ENCODE measurements at regions of chr17 and their contacts with region 1.

Region 1: GRCh38 chr17:74864866-74865395 is 5.2 kb upstream of the GRIN2C start:
- DNase-seq: peak; percentile 57
- H3K4me3 Mint-ChIP-seq: no peak overlapping the region
- H3K27ac Mint-ChIP-seq: no peak overlapping the region
- H3K4me1 Mint-ChIP-seq: no peaks in the 10 kb centered on the region
- H3K27me3 Mint-ChIP-seq: peaks cover 13% of the 10 kb centered on the region
- CTCF ChIP-seq: peak; percentile 83

Region 2: GRCh38 chr17:74566132-74566753 is 298.7 kb before region 1 on chr17:
- CTCF ChIA-PET with region 1: no interaction called
- POLR2A ChIA-PET with region 1: no interaction called
- intact Hi-C with region 1: loop called (anchors 10 kb)
- DNase-seq: peak; percentile 78
- H3K4me3 Mint-ChIP-seq: no peak overlapping the region
- H3K27ac Mint-ChIP-seq: no peak overlapping the region
- H3K4me1 Mint-ChIP-seq: peaks cover 33% of the 10 kb centered on the region
- H3K27me3 Mint-ChIP-seq: no peaks in the 10 kb centered on the region
- CTCF ChIP-seq: peak; percentile 66

Region 3: DNA sequence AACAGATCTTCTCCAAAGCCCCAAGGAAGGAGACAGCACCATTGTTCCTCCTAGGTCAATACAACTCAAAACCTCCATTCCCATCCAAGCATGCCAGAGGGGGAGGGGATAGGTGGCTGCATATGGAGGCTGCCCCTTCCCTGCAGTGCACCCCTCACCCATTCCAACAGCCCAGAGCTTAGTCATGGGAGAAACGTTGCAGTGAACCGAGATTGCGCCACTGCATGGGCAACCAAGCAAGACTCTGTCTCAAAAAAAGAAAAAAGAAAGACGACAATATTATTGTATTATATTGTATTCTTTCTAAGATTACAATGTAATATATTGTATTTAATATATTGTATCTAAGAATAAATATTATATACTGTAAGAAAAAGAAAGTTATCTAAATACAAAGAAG is 205.0 kb before region 1 on chr17:
- CTCF ChIA-PET with region 1: interaction called, 6 read pairs
- POLR2A ChIA-PET with region 1: no interaction called
- intact Hi-C with region 1: loop called (anchors 2 kb)
- DNase-seq: no peak
- H3K4me3 Mint-ChIP-seq: no peak overlapping the region
- H3K27ac Mint-ChIP-seq: no peak overlapping the region
- H3K4me1 Mint-ChIP-seq: peaks cover 6% of the 10 kb centered on the region
- H3K27me3 Mint-ChIP-seq: peaks cover 89% of the 10 kb centered on the region
- CTCF ChIP-seq: no peak

Region 4: GRCh38 chr17:74742153-74742515 is 122.8 kb before region 1 on chr17:
- CTCF ChIA-PET with region 1: interaction called, 69 read pairs
- POLR2A ChIA-PET with region 1: interaction called, 7 read pairs
- intact Hi-C with region 1: no loop called
- DNase-seq: no peak
- H3K4me3 Mint-ChIP-seq: no peak overlapping the region
- H3K27ac Mint-ChIP-seq: no peak overlapping the region
- H3K4me1 Mint-ChIP-seq: peaks cover 6% of the 10 kb centered on the region
- H3K27me3 Mint-ChIP-seq: peaks cover 15% of the 10 kb centered on the region
- CTCF ChIP-seq: no peak

Region 5: DNA sequence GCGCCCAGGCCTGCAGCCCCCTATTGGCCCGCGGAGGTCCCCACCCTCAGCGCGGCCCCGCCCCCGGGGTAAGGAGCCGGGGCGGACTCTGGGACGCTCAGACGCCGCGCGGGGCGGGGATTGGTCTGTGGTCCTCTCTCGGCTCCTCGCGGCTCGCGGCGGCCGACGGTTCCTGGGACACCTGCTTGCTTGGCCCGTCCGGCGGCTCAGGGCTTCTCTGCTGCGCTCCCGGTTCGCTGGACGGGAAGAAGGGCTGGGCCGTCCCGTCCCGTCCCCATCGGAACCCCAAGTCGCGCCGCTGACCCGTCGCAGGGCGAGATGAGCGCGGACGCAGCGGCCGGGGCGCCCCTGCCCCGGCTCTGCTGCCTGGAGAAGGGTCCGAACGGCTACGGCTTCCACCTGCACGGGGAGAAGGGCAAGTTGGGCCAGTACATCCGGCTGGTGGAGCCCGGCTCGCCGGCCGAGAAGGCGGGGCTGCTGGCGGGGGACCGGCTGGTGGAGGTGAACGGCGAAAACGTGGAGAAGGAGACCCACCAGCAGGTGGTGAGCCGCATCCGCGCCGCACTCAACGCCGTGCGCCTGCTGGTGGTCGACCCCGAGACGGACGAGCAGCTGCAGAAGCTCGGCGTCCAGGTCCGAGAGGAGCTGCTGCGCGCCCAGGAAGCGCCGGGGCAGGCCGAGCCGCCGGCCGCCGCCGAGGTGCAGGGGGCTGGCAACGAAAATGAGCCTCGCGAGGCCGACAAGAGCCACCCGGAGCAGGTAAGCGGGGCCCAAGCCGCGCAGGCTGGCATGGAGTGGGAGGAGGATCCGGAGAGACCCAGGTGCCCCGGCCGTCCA is 116.2 kb before region 1 on chr17 and contains the start of gene NHERF1:
- CTCF ChIA-PET with region 1: interaction called, 69 read pairs
- POLR2A ChIA-PET with region 1: interaction called, 7 read pairs
- intact Hi-C with region 1: no loop called
- DNase-seq: peak; percentile 94
- H3K4me3 Mint-ChIP-seq: peak within 1 kb of the TSS; percentile 88
- H3K27ac Mint-ChIP-seq: peak within 1 kb of the TSS; percentile 57
- H3K4me1 Mint-ChIP-seq: peaks cover 34% of the 10 kb centered on the region
- H3K27me3 Mint-ChIP-seq: no peaks in the 10 kb centered on the region
- CTCF ChIP-seq: no peak
- total RNA-seq, gene NHERF1: 23.9 and 25.3 TPM in 2 replicates

Region 6: DNA sequence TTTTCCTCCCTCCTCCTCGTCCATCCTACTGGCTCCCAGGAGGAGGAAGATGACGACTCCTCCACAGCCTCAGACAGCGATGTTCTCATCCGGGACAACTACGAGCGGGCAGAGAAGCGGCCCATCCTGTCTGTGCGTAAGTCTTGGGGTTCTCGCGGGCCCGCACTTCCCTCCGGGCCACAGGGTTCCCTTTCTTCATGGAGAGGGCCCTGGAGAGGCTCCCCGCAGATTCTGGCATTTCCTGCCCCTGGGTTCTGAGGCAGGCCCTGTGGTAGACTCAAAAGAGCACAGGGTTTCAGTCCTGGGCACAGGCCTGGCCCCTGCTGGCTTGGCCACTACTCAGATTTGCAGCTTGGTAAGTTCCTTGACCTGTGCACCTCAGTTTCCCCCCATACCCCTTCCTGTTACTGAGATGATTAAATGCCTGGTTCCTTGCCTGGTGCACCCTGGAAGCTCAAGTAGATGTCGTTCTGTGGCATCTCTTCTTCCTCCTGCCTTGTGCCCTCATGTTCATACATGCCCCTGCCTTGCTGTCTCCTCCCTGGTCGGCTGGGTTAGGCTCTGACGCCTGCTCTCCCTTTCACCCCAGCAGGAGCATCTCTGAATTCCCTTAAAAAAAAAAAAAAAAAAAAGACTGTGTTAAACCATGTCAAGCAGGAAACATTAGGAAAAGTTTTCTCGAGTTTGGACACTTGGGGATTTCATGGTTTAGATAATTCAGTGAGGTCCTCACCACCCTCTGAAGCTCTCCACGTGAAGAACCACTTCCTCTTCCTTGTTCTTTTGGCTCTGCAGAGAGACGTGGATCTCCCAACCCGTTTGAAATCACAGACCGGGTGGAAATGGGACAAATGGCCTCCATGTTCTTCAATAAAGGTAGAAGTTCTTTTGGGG is 74.5 kb before region 1 on chr17:
- CTCF ChIA-PET with region 1: interaction called, 15 read pairs
- POLR2A ChIA-PET with region 1: no interaction called
- intact Hi-C with region 1: loop called (anchors 1 kb)
- DNase-seq: no peak
- H3K4me3 Mint-ChIP-seq: no peak overlapping the region
- H3K27ac Mint-ChIP-seq: no peak overlapping the region
- H3K4me1 Mint-ChIP-seq: peaks cover 6% of the 10 kb centered on the region
- H3K27me3 Mint-ChIP-seq: no peaks in the 10 kb centered on the region
- CTCF ChIP-seq: no peak

Region 7: GRCh38 chr17:74842599-74843351 is 22.2 kb before region 1 on chr17:
- CTCF ChIA-PET with region 1: interaction called, 12 read pairs
- POLR2A ChIA-PET with region 1: no interaction called
- intact Hi-C with region 1: no loop called
- DNase-seq: peak; percentile 35
- H3K4me3 Mint-ChIP-seq: no peak overlapping the region
- H3K27ac Mint-ChIP-seq: no peak overlapping the region
- H3K4me1 Mint-ChIP-seq: peaks cover 8% of the 10 kb centered on the region
- H3K27me3 Mint-ChIP-seq: no peaks in the 10 kb centered on the region
- CTCF ChIP-seq: peak; percentile 50

Region 8: DNA sequence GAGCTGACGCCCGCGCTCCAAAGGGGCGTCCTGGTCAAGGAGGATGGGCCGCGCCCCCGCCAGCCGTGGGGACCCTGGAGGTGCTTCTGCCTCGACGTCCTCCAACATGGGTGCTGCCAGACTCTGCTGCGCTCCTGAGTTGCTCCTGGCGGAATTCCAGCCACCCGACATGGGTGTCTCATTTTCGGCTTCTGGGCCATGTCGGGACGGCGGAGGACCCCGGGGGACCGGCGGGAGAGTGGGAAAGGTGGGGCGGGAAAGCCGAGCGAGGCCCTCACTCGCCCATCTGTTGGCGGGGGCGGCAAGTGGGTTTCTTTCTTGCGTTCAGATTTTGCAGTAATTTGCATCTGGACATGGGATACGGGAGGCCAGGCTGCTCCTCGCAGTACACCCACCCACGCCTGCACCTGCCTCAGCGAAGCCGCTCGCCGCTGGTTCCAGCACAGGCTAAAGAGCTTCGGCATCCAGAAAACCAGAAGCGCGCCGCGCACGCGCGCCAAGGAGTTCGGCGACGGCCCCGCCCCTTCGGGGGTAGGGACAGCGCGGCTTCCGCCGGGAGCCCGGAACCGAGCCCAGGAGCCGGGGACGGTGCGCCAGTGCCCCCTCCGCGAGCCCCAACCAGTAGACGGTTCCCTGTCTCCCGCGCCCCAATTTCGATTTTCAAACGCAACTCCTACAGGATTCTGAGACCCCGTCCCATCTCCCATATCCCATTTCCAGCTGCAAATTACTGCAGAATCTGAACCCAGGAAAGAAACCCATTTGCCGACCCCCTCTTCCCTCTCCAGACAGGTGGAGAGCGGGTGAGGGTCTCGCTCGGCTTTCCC is 244.7 kb after region 1 on chr17 and contains the start of gene ARMC7:
- CTCF ChIA-PET with region 1: no interaction called
- POLR2A ChIA-PET with region 1: no interaction called
- intact Hi-C with region 1: no loop called
- DNase-seq: peak; percentile 86
- H3K4me3 Mint-ChIP-seq: peak within 1 kb of the TSS; percentile 78
- H3K27ac Mint-ChIP-seq: peak within 1 kb of the TSS; percentile 39
- H3K4me1 Mint-ChIP-seq: peaks cover 12% of the 10 kb centered on the region
- H3K27me3 Mint-ChIP-seq: no peaks in the 10 kb centered on the region
- CTCF ChIP-seq: no peak
- total RNA-seq, gene ARMC7: 9.3 and 13.3 TPM in 2 replicates

Measured in MCF 10A (cell line).